ENCODE measurements at regions of chr15 and their contacts with region 1.

Region 1: GRCh38 chr15:100988857-100989256 is 69.7 kb downstream of the LRRK1 start:
- DNase-seq: no peak

Region 2: DNA sequence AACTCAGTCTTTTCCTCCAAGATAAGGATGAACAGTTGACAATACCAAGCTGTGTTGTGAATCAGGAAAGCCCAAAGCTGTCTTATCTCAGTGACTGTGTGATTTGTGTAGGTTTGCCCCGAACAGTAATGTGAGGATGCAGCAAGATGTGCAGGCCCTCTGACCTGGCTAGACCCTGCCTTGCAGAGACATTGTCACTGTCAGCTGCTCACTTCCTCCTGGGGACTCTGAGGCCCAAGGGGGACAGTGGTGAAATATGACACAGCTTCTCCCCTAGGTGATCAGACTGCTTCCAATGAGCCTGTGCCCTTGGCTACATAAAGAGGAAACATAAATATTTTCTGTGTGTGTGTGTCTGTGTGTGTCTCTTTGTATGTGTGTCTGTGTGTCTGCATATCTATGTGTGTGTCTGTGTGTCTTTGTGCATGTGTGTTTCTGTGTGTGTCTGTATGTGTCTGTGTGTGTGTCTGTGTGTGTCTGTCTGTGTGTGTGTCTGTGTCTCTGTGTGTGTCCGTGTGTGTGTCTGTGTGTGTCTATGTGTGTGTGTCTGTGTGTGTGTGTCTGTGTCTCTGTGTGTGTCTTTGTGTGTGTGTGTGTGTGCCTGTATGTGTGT is 48.0 kb before region 1 on chr15:
- intact Hi-C with region 1: loop called in 1 of 2 experiments (anchors 1 kb)
- DNase-seq: no peak

Region 3: DNA sequence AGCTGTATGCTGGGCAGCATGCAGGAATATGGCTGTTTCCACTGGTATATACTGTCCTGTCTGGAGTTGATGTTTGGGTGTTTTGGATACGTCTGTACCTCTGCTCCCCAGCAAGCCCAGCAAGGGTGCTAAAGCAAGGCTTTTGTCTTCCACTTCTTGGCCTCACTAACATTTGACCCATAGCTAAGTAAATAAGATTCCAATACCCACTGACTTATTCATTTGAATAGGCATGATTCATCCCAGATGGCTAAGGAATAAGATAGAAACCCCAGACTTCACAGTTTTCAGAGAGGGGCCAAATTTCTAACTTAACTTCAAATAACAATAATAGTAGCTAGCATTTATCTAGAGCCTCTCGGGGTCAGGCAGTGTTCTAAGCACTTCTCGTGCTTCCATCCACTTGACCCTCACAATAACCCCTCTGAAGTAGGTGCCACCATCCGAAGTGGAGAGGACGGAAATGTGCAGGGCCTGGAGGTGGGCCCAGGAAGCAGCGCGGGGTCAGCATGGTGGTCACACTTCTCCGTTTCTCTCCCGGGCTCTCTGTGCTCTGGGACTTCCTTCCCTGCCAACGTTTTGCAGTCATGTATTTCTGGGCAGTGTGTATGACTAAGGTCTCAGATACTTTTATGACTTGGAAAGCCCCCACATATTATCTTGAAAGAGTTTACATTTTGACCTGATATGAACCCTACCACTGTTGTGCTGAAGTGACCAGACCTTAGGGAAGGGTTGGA is 30.4 kb before region 1 on chr15:
- intact Hi-C with region 1: no loop called
- DNase-seq: no peak

Region 4: DNA sequence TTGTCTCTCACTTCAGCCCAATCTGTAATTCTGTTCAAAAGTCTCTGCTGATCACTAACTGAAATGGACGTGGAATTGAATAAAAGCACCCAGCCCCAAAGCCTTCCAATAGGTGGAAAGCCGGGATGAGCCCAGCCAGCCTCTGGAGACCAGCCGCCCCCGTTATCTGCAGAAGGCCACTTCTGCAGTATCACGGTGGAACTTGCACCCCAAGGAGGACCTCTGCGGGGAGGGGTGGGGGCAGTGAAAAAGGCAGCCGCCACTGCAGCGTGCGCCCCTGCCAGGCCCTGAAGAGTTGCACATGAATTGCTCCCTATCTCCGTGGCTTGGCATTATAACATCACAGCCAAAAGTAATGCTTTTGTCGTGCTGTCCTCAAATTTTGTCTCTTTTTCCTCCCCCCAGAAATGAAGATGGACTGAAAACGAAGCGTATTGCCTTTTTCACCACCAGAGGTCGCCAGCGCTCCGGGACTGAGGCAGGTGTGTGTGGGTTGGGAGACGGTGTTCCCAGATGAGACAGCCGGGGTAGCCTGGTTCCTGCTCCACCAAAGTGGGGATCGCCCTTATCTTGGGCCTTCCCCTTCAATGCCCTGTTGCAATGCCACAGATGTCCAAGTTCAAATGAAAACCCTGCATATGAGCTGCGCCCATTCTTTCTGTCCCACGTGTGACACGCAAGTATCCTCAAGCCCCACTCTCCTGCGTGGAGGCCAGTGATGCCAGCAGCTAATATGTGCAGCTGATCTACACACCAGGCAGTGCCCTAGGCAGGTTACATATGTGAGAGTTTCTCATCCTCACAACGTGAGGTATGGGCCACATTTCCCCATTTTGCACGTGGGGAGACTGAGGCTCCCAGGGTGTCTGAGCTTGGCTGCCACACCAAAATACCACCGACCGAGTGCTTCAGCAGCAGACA is 26.3 kb after region 1 on chr15:
- intact Hi-C with region 1: no loop called
- DNase-seq: peak; percentile 91